Panc1 (cell line): ENCODE measurements at regions of chr15 and their contacts with region 1.

Region 1: GRCh38 chr15:38474155-38474757 is 20.3 kb downstream of the FAM98B start:
- DNase-seq: peak; percentile 46
- ATAC-seq: peak; percentile 94
- H3K4me3 ChIP-seq: no peak overlapping the region
- H3K27ac ChIP-seq: no peak overlapping the region
- H3K4me1 ChIP-seq: no peaks in the 10 kb centered on the region
- H3K27me3 ChIP-seq: no peaks in the 10 kb centered on the region
- CTCF ChIP-seq: peak; percentile 71

Region 2: GRCh38 chr15:38690689-38691332 is 216.6 kb after region 1 on chr15:
- CTCF ChIA-PET with region 1: no interaction called
- POLR2A ChIA-PET with region 1: no interaction called
- in situ Hi-C with region 1: loop called (anchors 25 kb)
- intact Hi-C with region 1: loop called (anchors 2 kb)
- DNase-seq: no peak
- ATAC-seq: peak; percentile 78
- H3K4me3 ChIP-seq: no peak overlapping the region
- H3K27ac ChIP-seq: no peak overlapping the region
- H3K4me1 ChIP-seq: no peaks in the 10 kb centered on the region; the same call in 1 of the 2 replicates
- H3K27me3 ChIP-seq: peaks cover 5% of the 10 kb centered on the region; the same call in 1 of the 2 replicates
- CTCF ChIP-seq: peak; percentile 88